ENCODE measurements at regions of chr10 and their contacts with region 1.

Region 1: GRCh38 chr10:13299437-13300287 is at the start of gene PHYH:
- DNase-seq: peak; percentile 75
- ATAC-seq: peak; percentile 83
- H3K4me3 ChIP-seq: peak within 1 kb of the TSS; percentile 72
- H3K27ac ChIP-seq: peak within 1 kb of the TSS; percentile 32
- H3K4me1 ChIP-seq: peaks cover 5% of the 10 kb centered on the region; the same call in 1 of the 2 replicates
- H3K27me3 ChIP-seq: no peaks in the 10 kb centered on the region
- CTCF ChIP-seq: no peak
- total RNA-seq, gene PHYH: 4.4 and 13.2 TPM in 2 replicates

Region 2: GRCh38 chr10:13160934-13161856 is 138.5 kb before region 1 on chr10 and contains the start of gene MCM10:
- CTCF ChIA-PET with region 1: no interaction called
- POLR2A ChIA-PET with region 1: no interaction called
- intact Hi-C with region 1: loop called (anchors 2 kb)
- DNase-seq: peak; percentile 96
- ATAC-seq: peak; percentile 99
- H3K4me3 ChIP-seq: peak within 1 kb of the TSS; percentile 89
- H3K27ac ChIP-seq: no peak within 1 kb of the TSS
- H3K4me1 ChIP-seq: no peaks in the 10 kb centered on the region
- H3K27me3 ChIP-seq: no peaks in the 10 kb centered on the region
- CTCF ChIP-seq: peak; percentile 65
- total RNA-seq, gene MCM10: 14.3 and 16.1 TPM in 2 replicates

Region 3: DNA sequence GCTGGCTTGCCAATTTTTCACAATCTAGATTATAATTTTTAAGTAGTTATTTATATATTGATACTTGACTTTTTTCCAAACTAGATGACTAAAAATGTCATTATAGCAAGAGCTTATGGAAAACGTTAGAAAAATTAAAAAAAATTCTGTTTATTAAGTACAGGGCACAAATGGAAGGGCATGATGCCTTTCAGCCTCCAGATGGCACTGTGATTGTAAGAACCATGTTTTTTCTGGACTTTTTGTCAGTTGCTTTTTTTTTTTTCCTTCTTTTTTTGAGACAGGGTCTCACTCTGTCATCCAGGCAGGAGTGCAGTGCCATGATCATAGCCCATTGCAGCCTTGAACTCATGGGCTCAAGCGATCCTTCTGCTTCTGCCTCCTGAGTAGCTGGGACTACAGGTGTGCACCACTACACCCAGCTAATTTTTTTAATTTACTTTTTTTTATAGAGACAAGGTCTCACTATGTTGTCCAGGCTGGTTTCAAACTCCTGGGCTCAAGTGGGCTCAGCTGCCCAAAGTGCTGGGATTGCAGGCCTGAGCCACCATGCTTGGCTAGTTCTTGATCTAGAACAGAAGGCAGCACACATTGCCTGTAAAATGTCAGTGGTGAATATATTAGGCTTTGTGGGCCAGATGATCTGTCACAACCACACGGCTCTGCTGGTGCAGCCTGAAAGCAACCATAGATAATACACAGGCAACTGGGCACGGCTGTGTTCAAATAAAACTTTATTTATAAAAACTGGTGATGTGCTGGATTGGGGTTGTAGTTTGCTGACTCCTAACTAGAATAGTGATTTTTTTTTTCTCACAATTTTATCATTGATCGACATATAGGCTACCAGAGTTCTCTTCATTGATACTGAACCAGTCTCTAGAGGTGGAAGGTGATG is 92.9 kb before region 1 on chr10:
- CTCF ChIA-PET with region 1: interaction called, 3 read pairs
- POLR2A ChIA-PET with region 1: no interaction called
- intact Hi-C with region 1: loop called (anchors 2 kb)
- DNase-seq: peak; percentile 9
- ATAC-seq: no peak
- H3K4me3 ChIP-seq: no peak overlapping the region
- H3K27ac ChIP-seq: no peak overlapping the region
- H3K4me1 ChIP-seq: no peaks in the 10 kb centered on the region
- H3K27me3 ChIP-seq: no peaks in the 10 kb centered on the region
- CTCF ChIP-seq: peak; percentile 50

Region 4: GRCh38 chr10:13219685-13220670 is 79.7 kb before region 1 on chr10:
- CTCF ChIA-PET with region 1: no interaction called
- POLR2A ChIA-PET with region 1: interaction called, 4 read pairs
- intact Hi-C with region 1: loop called (anchors 5 kb)
- DNase-seq: peak; percentile 48
- ATAC-seq: peak; percentile 65
- H3K4me3 ChIP-seq: no peak overlapping the region
- H3K27ac ChIP-seq: no peak overlapping the region
- H3K4me1 ChIP-seq: peaks cover 3% of the 10 kb centered on the region; the same call in 1 of the 2 replicates
- H3K27me3 ChIP-seq: no peaks in the 10 kb centered on the region
- CTCF ChIP-seq: peak; percentile 46; the same call in 1 of the 2 replicates